ENCODE measurements at regions of chr9 and their contacts with region 1.

Region 1: GRCh38 chr9:131393622-131394463 is at the start of gene PRRC2B:
- DNase-seq: peak; percentile 71 to 90 (median 85)
- ATAC-seq: peak; percentile 75
- H3K4me3 ChIP-seq: peak within 1 kb of the TSS; percentile 69
- H3K4me3 Mint-ChIP-seq: peak within 1 kb of the TSS; percentile 87 to 99 (median 94)
- H3K27ac ChIP-seq: peak within 1 kb of the TSS; percentile 93
- H3K27ac Mint-ChIP-seq: peak within 1 kb of the TSS; percentile 92 to 99 (median 98)
- H3K4me1 ChIP-seq: peaks cover 44 to 45% of the 10 kb centered on the region in 2 donors
- H3K4me1 Mint-ChIP-seq: peaks cover 42 to 50% (median 49%) of the 10 kb centered on the region in 7 donors
- H3K27me3 ChIP-seq: no peaks in the 10 kb centered on the region
- H3K27me3 Mint-ChIP-seq: peaks cover 0 to 18% (median 0%) of the 10 kb centered on the region in 5 donors
- total RNA-seq, gene PRRC2B: 208 to 382 (median 272) TPM

Region 2: GRCh38 chr9:131253891-131254491 is 139.9 kb before region 1 on chr9:
- CTCF ChIA-PET with region 1: interaction called, 3 read pairs
- POLR2A ChIA-PET with region 1: interaction called, 3 read pairs
- intact Hi-C with region 1: loop called in 1 of 2 experiments (anchors 5 kb)
- DNase-seq: peak in 1 of 9 donors; percentile 7
- ATAC-seq: no peak
- H3K4me3 ChIP-seq: no peak overlapping the region
- H3K4me3 Mint-ChIP-seq: peak overlapping the region; percentile 23 to 87 (median 52)
- H3K27ac ChIP-seq: peak overlapping the region; percentile 16
- H3K27ac Mint-ChIP-seq: peak overlapping the region; percentile 80 to 99 (median 96)
- H3K4me1 ChIP-seq: peaks cover 63 to 73% of the 10 kb centered on the region in 2 donors
- H3K4me1 Mint-ChIP-seq: peaks cover 13 to 74% (median 57%) of the 10 kb centered on the region in 7 donors
- H3K27me3 ChIP-seq: no peaks in the 10 kb centered on the region
- H3K27me3 Mint-ChIP-seq: no peaks in the 10 kb centered on the region

Region 3: DNA sequence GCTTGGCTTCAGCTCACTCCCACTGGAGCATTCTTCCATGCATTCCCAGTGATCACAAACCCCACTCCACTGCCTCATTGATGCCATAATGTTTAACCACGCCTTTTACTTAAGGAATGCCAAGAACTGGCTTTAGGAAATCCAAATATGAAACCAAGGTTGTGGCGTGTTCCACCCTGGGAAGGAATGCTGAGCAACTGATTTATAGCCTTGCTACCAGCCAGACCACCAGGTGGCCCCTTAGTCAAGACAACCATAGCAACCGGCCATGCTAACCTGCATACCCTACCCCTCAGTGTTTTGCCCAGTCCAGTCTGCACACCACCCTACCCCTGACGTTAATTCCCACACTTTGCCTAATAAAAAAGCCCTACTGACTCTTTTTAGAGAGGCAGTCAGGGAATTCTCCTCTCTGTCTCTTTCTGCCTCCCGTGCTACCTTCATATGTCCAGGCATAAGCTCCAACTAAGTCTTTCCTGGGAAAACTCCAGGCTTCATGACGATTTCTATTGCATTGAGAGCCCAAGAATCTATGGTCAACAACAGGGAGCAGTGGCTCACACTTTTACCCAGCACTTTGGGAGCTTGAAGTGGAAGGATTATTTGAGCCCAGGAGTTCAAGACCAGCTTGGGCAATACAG is 27.0 kb before region 1 on chr9:
- CTCF ChIA-PET with region 1: interaction called, 3 read pairs
- POLR2A ChIA-PET with region 1: interaction called, 51 read pairs
- intact Hi-C with region 1: no loop called
- DNase-seq: no peak
- ATAC-seq: no peak
- H3K4me3 ChIP-seq: no peak overlapping the region
- H3K4me3 Mint-ChIP-seq: no peak overlapping the region
- H3K27ac ChIP-seq: no peak overlapping the region
- H3K27ac Mint-ChIP-seq: peak overlapping the region in 1 of 9 donors; percentile 31
- H3K4me1 ChIP-seq: peaks cover 0 to under 1% of the 10 kb centered on the region in 2 donors
- H3K4me1 Mint-ChIP-seq: peaks cover 1 to 43% (median 19%) of the 10 kb centered on the region in 7 donors
- H3K27me3 ChIP-seq: no peaks in the 10 kb centered on the region
- H3K27me3 Mint-ChIP-seq: no peaks in the 10 kb centered on the region

Region 4: GRCh38 chr9:131432597-131433306 is 38.9 kb after region 1 on chr9:
- CTCF ChIA-PET with region 1: no interaction called
- POLR2A ChIA-PET with region 1: no interaction called
- intact Hi-C with region 1: loop called (anchors 5 kb)
- DNase-seq: no peak
- ATAC-seq: no peak
- H3K4me3 ChIP-seq: no peak overlapping the region
- H3K4me3 Mint-ChIP-seq: peak overlapping the region in 1 of 10 donors; percentile 32
- H3K27ac ChIP-seq: no peak overlapping the region
- H3K27ac Mint-ChIP-seq: peak overlapping the region in 7 of 9 donors; percentile 32 to 65 (median 57)
- H3K4me1 ChIP-seq: peaks cover 7 to 17% of the 10 kb centered on the region in 2 donors
- H3K4me1 Mint-ChIP-seq: peaks cover 17 to 45% (median 32%) of the 10 kb centered on the region in 7 donors
- H3K27me3 ChIP-seq: no peaks in the 10 kb centered on the region
- H3K27me3 Mint-ChIP-seq: no peaks in the 10 kb centered on the region

Region 5: GRCh38 chr9:131668439-131669268 is 274.8 kb after region 1 on chr9:
- CTCF ChIA-PET with region 1: no interaction called
- POLR2A ChIA-PET with region 1: no interaction called
- intact Hi-C with region 1: loop called in 1 of 2 experiments (anchors 10 kb)
- DNase-seq: peak; percentile 24 to 72 (median 49)
- ATAC-seq: peak; percentile 81
- H3K4me3 ChIP-seq: peak overlapping the region; percentile 1
- H3K4me3 Mint-ChIP-seq: peak overlapping the region; percentile 66 to 87 (median 78)
- H3K27ac ChIP-seq: peak overlapping the region; percentile 68
- H3K27ac Mint-ChIP-seq: peak overlapping the region; percentile 86 to 98 (median 94)
- H3K4me1 ChIP-seq: peaks cover 59 to 77% of the 10 kb centered on the region in 2 donors
- H3K4me1 Mint-ChIP-seq: peaks cover 51 to 93% (median 83%) of the 10 kb centered on the region in 7 donors
- H3K27me3 ChIP-seq: no peaks in the 10 kb centered on the region
- H3K27me3 Mint-ChIP-seq: no peaks in the 10 kb centered on the region

Region 6: DNA sequence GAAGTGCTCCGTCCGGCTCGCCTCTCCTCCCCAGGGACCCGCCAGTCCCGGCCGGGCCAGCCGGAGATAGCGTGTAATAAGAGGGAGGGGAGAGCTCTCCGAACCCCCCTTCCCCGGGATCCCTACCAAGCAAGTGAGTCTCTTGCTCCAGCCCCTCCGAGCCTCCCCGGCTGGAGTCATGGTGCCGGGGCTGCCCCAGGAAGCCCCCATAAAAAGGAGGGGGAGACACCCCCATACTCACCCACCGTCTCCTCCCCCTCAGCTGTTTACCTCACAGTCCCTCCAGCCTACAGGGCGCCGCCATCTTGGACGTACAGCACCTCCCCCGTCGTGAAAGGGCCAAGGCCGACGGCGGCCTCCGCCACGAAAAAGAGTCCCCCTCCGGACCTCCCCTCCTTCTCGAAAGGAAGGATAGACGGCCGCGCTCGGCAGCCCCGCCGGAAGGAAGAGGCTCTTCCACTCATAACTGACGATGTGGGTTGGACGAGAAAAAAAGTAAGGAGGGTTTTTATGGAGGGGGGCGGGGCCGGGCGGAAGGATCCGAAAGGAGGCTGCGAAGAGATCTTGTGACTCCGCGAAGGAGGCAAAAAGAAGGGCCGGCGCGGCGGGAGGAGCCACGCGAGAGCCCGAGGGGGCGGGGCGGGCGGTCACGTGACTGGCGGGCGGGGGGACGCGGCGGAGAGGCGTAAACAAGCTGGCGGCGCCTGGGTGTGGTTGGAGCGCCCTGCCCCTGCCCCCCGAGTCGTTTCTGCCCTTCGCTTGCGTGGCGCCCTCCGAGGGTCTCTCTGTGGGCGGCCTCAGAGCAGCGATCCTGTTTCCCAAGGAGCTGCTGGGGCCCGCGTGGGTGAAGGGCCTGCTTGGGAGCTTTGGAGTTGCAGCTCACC is 1550.7 kb after region 1 on chr9 and contains the start of gene TSC1:
- CTCF ChIA-PET with region 1: no interaction called
- POLR2A ChIA-PET with region 1: no interaction called
- intact Hi-C with region 1: loop called in 1 of 2 experiments (anchors 10 kb)
- DNase-seq: peak; percentile 96 to 99 (median 98)
- ATAC-seq: peak; percentile 94
- H3K4me3 ChIP-seq: peak within 1 kb of the TSS; percentile 93
- H3K4me3 Mint-ChIP-seq: peak within 1 kb of the TSS; percentile 90 to 99 (median 98)
- H3K27ac ChIP-seq: peak within 1 kb of the TSS; percentile 94
- H3K27ac Mint-ChIP-seq: peak within 1 kb of the TSS; percentile 99 to 100 (median 100)
- H3K4me1 ChIP-seq: peaks cover 8 to 14% of the 10 kb centered on the region in 2 donors
- H3K4me1 Mint-ChIP-seq: peaks cover 15 to 45% (median 27%) of the 10 kb centered on the region in 7 donors
- H3K27me3 ChIP-seq: no peaks in the 10 kb centered on the region
- H3K27me3 Mint-ChIP-seq: peaks cover 0 to 3% (median 0%) of the 10 kb centered on the region in 5 donors
- total RNA-seq, gene TSC1: 38.1 to 98.3 (median 59.6) TPM

Measured in naive thymus-derived CD4-positive, alpha-beta T cell (primary cell).